GM10248 (cell line): ENCODE measurements at regions of chr4 and their contacts with region 1.

Region 1: GRCh38 chr4:10684631-10685030 is at the start of gene CLNK:
- DNase-seq: peak; percentile 51
- CTCF ChIP-seq: no peak

Region 2: DNA sequence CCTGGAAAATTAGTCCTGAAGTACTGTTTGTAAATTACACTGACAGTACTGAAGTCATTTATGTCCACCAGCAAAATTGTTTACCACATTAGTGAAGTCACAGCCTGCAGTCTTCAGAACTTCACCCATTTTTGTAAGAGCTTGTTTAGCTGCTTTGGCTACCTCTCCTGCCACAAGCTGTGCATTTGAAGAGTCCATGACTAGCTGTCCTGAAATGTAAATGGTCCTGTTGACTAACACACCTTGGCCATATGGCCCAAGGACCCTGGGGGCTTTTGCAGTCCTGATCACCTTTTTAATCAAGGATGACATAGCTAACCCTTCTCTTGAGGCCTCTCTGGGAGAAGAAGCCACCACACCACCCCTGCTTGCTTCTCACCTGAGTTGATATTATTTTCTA is 206.0 kb before region 1 on chr4:
- CTCF ChIA-PET with region 1: no interaction called
- POLR2A ChIA-PET with region 1: no interaction called
- DNase-seq: no peak
- CTCF ChIP-seq: no peak

Region 3: DNA sequence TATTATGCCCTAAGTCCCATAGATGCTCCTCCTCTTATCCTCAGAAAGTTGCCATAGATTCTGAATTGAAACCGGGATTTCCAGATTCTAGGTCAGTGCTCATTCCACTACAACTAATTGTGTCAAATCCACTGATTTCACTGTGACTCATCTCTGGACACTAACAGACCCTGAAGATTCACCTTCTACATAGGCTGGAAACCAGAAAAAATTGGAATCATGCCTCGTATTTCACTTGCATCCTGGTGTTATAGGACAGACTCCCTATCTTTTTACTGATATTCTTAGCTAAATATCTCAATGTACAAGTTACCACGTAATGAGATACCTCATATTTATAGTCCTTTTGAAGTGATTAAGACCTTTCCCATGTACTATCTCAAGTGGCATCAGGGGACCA is 36.8 kb before region 1 on chr4:
- CTCF ChIA-PET with region 1: no interaction called
- POLR2A ChIA-PET with region 1: no interaction called
- DNase-seq: no peak
- CTCF ChIP-seq: no peak

Region 4: GRCh38 chr4:10671366-10671765 is 13.3 kb before region 1 on chr4:
- CTCF ChIA-PET with region 1: interaction called, 11 read pairs
- POLR2A ChIA-PET with region 1: no interaction called
- DNase-seq: peak; percentile 35
- CTCF ChIP-seq: no peak